ENCODE measurements at regions of chr15 and their contacts with region 1.

Region 1: DNA sequence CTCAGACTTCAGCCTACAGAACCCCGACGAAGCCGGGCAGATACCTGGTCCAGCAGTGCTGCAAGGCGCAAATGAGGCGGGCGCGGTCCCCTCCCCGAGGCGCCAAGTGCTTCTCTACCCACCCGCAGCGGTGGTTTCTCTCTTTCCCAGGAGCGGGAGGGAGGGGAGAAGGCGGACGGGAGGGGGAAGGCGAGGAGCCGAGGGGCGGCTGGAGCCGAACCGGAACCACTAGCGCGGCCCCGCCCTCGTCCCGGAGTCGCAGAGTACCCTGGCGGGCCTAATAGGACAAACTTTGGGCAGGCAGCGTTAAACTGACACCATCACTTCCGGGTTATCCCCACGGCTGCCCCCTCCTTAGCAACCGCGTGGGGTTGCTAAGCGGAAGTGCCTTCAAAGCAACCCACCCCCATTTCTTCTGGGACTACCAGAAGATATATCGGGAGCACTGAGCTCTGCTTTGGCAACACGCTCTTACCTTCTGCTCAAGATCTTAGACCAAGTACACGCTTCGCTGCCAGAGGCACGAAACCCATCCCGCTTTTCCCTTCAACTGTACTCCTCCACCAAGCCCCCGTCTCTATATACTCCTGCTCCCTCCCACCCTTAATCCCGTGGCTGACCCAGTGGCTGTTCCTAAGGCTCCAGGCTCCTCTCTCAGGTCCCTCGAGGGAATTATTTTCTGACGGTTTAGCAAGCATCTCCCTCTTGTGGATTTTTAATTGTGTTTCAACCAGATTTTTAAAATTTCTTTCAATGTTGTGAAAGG is at the start of gene CSNK1G1:
- DNase-seq: peak; percentile 83 to 97
- ATAC-seq: peak; percentile 97 to 99 (median 99)
- H3K4me3 ChIP-seq: peak within 1 kb of the TSS; percentile 84
- H3K4me3 Mint-ChIP-seq: peak within 1 kb of the TSS; percentile 91
- H3K27ac ChIP-seq: peak within 1 kb of the TSS; percentile 22
- H3K27ac Mint-ChIP-seq: peak within 1 kb of the TSS; percentile 79 to 85
- H3K4me1 ChIP-seq: peaks cover 8% of the 10 kb centered on the region
- H3K4me1 Mint-ChIP-seq: peaks cover 17 to 22% of the 10 kb centered on the region in 2 donors
- H3K27me3 ChIP-seq: no peaks in the 10 kb centered on the region
- H3K27me3 Mint-ChIP-seq: no peaks in the 10 kb centered on the region
- CTCF ChIP-seq: peak; percentile 40
- total RNA-seq, gene CSNK1G1: 26.2 to 36.8 (median 34.0) TPM

Region 2: GRCh38 chr15:64209680-64210334 is 146.3 kb before region 1 on chr15:
- intact Hi-C with region 1: loop called (anchors 1 kb)
- DNase-seq: peak in 1 of 2 donors; percentile 41
- ATAC-seq: peak in 1 of 3 donors; percentile 39
- H3K4me3 ChIP-seq: no peak overlapping the region
- H3K4me3 Mint-ChIP-seq: no peak overlapping the region
- H3K27ac ChIP-seq: no peak overlapping the region
- H3K27ac Mint-ChIP-seq: peak overlapping the region in 1 of 2 donors; percentile 48
- H3K4me1 ChIP-seq: no peaks in the 10 kb centered on the region
- H3K4me1 Mint-ChIP-seq: peaks cover 4 to 17% of the 10 kb centered on the region in 2 donors
- H3K27me3 ChIP-seq: no peaks in the 10 kb centered on the region
- H3K27me3 Mint-ChIP-seq: no peaks in the 10 kb centered on the region
- CTCF ChIP-seq: peak; percentile 44

Region 3: GRCh38 chr15:64247906-64248541 is 108.1 kb before region 1 on chr15:
- intact Hi-C with region 1: loop called (anchors 1 kb)
- DNase-seq: peak in 1 of 2 donors; percentile 55
- ATAC-seq: peak; percentile 80 to 88 (median 82)
- H3K4me3 ChIP-seq: no peak overlapping the region
- H3K4me3 Mint-ChIP-seq: no peak overlapping the region
- H3K27ac ChIP-seq: peak overlapping the region; percentile 42
- H3K27ac Mint-ChIP-seq: peak overlapping the region; percentile 72 to 89
- H3K4me1 ChIP-seq: no peaks in the 10 kb centered on the region
- H3K4me1 Mint-ChIP-seq: peaks cover 37 to 40% of the 10 kb centered on the region in 2 donors
- H3K27me3 ChIP-seq: no peaks in the 10 kb centered on the region
- H3K27me3 Mint-ChIP-seq: no peaks in the 10 kb centered on the region
- CTCF ChIP-seq: no peak

Region 4: DNA sequence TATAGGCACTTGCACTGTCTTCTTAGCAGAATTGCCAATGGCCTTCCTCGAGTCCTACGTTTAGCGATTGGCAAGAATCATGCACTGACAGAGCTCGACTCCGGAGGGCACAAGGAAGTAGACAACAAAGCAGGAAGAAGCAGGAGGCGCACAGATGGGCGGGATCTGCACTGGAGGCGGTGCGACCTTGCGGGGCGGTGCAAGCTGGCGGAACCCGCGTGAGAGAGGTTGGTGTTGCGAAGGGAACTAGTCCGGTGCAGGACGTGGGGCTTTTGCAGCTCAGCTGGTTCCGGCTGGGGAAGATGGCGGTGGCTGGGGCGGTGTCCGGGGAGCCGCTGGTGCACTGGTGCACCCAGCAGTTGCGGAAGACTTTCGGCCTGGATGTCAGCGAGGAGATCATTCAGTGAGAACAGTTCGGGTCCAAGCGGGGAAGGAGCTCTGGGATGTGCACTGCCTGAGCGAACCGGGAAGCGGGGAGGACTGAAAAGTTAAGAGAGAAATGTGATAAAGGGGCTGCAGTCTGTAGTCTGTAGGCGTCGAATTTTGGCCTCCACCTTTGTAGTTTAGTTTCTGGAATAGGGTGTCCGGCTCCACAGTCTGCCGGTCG is 31.5 kb after region 1 on chr15 and contains the start of gene TRIP4:
- intact Hi-C with region 1: loop called (anchors 1 kb)
- DNase-seq: peak; percentile 95 to 98
- ATAC-seq: peak; percentile 99 to 100 (median 99)
- H3K4me3 ChIP-seq: peak within 1 kb of the TSS; percentile 85
- H3K4me3 Mint-ChIP-seq: peak within 1 kb of the TSS; percentile 99
- H3K27ac ChIP-seq: peak within 1 kb of the TSS; percentile 79
- H3K27ac Mint-ChIP-seq: peak within 1 kb of the TSS; percentile 91 to 98
- H3K4me1 ChIP-seq: peaks cover 16% of the 10 kb centered on the region
- H3K4me1 Mint-ChIP-seq: peaks cover 18 to 30% of the 10 kb centered on the region in 2 donors
- H3K27me3 ChIP-seq: no peaks in the 10 kb centered on the region
- H3K27me3 Mint-ChIP-seq: no peaks in the 10 kb centered on the region
- CTCF ChIP-seq: no peak
- total RNA-seq, gene TRIP4: 32.9 to 37.1 (median 33.7) TPM

Region 5: GRCh38 chr15:64443747-64444621 is 87.9 kb after region 1 on chr15:
- intact Hi-C with region 1: no loop called
- DNase-seq: peak in 1 of 2 donors; percentile 36
- ATAC-seq: no peak
- H3K4me3 ChIP-seq: no peak overlapping the region
- H3K4me3 Mint-ChIP-seq: no peak overlapping the region
- H3K27ac ChIP-seq: no peak overlapping the region
- H3K27ac Mint-ChIP-seq: no peak overlapping the region
- H3K4me1 ChIP-seq: peaks cover 4% of the 10 kb centered on the region
- H3K4me1 Mint-ChIP-seq: peaks cover 1 to 24% of the 10 kb centered on the region in 2 donors
- H3K27me3 ChIP-seq: no peaks in the 10 kb centered on the region
- H3K27me3 Mint-ChIP-seq: no peaks in the 10 kb centered on the region
- CTCF ChIP-seq: no peak